AG04449 (cell line): ENCODE measurements at regions of chr9 and their contacts with region 1.

Region 1: GRCh38 chr9:126678989-126679388 is 65.3 kb downstream of the LMX1B start:
- DNase-seq: no peak
- H3K4me3 ChIP-seq: no peak overlapping the region
- CTCF ChIP-seq: no peak

Region 2: GRCh38 chr9:126347911-126348760 is 330.9 kb before region 1 on chr9:
- CTCF ChIA-PET with region 1: no interaction called
- POLR2A ChIA-PET with region 1: no interaction called
- DNase-seq: no peak
- H3K4me3 ChIP-seq: no peak overlapping the region
- CTCF ChIP-seq: no peak

Region 3: DNA sequence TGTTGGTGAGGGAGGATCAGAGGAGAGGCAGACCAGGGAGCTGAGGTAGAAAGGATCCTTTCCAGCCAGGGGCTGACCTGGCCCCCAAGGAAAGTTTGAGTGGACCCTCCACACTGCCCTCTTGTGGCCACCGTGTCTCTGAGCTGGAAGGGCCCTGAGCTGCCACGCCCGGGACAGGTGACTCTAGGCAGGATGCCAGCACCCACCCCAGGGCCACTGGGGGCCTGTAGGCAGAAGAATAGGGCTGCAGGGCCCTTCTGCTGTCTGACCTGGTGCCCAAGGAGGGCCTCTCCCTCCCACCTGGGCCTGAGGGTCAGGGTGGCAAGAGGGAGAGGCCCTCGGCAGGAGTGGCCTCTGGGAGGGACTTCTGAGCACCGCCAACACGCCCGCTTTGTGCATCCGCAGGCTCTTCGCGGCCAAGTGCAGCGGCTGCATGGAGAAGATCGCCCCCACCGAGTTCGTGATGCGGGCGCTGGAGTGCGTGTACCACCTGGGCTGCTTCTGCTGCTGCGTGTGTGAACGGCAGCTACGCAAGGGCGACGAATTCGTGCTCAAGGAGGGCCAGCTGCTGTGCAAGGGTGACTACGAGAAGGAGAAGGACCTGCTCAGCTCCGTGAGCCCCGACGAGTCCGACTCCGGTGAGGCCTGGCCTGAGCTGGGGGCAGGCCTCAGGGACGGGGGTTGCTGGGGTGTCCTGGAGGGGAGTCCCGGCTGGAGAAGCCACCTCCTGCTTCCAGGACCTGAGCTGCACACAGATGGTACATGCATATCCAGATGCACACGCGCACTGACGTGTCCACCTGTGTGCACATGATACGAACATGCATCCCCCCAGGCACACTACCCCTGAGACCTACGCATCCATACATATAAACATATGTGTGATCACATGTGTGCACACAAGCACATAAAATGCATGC is 11.7 kb after region 1 on chr9:
- CTCF ChIA-PET with region 1: interaction called, 17 read pairs
- POLR2A ChIA-PET with region 1: no interaction called
- DNase-seq: no peak
- H3K4me3 ChIP-seq: no peak overlapping the region
- CTCF ChIP-seq: peak; percentile 58